ENCODE measurements at regions of chr5 and their contacts with region 1.

Region 1: GRCh38 chr5:144187699-144188294 is 17.1 kb downstream of the KCTD16 start:
- DNase-seq: no peak
- ATAC-seq: no peak
- H3K4me3 ChIP-seq: no peak overlapping the region
- H3K27ac ChIP-seq: no peak overlapping the region
- H3K4me1 ChIP-seq: no peaks in the 10 kb centered on the region
- H3K27me3 ChIP-seq: peaks cover 12% of the 10 kb centered on the region; the same call in 1 of the 2 replicates
- CTCF ChIP-seq: no peak
- POLR2A ChIP-seq: no peak
- RAD21 ChIP-seq: no peak

Region 2: DNA sequence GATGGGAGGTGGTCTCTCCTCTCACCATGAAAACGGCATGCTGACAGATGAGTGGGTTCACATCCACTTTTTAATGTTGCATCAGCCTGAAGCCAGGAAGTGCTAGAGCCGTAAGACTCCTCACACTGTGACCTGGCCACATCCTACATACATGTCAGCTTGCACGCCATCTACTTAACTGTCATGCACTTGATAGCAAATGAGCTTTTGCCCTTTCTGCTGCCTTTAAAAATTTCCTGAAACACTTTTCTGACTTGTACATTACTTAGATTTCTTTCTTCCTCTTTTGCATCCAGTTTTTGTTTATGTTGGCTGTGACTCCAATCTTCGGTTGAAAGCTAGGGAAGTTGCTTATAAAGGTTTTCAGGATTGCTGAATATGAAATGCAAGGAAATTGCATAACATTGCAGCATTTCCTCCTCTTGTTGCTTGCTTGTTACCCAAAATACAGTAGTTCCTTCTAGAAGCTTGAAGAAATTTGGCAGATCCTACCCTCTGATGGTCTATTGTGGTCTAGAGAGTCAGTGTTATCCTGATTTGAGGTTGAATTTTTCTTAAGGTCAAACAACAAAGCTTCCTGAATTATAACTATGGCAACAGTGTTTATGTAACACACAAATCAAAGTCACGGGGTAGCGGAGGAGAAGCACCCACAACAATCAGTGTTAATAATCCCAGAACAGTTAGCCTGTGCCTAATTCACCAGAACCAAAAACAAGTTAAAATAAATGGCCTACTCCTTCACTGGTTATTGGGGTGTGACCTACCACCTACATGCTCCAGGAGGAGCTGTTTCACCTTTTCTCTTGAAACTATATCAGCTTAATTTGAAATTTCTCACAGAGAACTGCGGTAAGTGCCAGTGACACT is 1185.1 kb before region 1 on chr5:
- CTCF ChIA-PET with region 1: no interaction called
- POLR2A ChIA-PET with region 1: no interaction called
- RAD21 ChIA-PET with region 1: no interaction called
- intact Hi-C with region 1: loop called (anchors 10 kb)
- DNase-seq: no peak
- ATAC-seq: peak; percentile 76
- H3K4me3 ChIP-seq: no peak overlapping the region
- H3K27ac ChIP-seq: no peak overlapping the region
- H3K4me1 ChIP-seq: peaks cover 4 to 6% of the 10 kb centered on the region in 2 experiments; a peak in 2 of 4 replicates
- H3K27me3 ChIP-seq: no peaks in the 10 kb centered on the region
- CTCF ChIP-seq: peak; percentile 40 to 63 (median 43); a peak in 4 of 6 replicates
- POLR2A ChIP-seq: no peak
- RAD21 ChIP-seq: peak; percentile 72

Region 3: GRCh38 chr5:143685246-143685802 is 502.5 kb before region 1 on chr5:
- CTCF ChIA-PET with region 1: no interaction called
- POLR2A ChIA-PET with region 1: no interaction called
- RAD21 ChIA-PET with region 1: no interaction called
- intact Hi-C with region 1: no loop called
- DNase-seq: no peak
- ATAC-seq: no peak
- H3K4me3 ChIP-seq: no peak overlapping the region
- H3K27ac ChIP-seq: no peak overlapping the region
- H3K4me1 ChIP-seq: no peaks in the 10 kb centered on the region
- H3K27me3 ChIP-seq: no peaks in the 10 kb centered on the region
- CTCF ChIP-seq: peak; percentile 20 to 40 (median 32); a peak in 4 of 6 replicates
- POLR2A ChIP-seq: no peak
- RAD21 ChIP-seq: peak; percentile 74

Region 4: GRCh38 chr5:144121577-144121976 is 66.2 kb before region 1 on chr5:
- CTCF ChIA-PET with region 1: no interaction called
- POLR2A ChIA-PET with region 1: no interaction called
- RAD21 ChIA-PET with region 1: no interaction called
- intact Hi-C with region 1: no loop called
- DNase-seq: no peak
- ATAC-seq: no peak
- H3K4me3 ChIP-seq: no peak overlapping the region
- H3K27ac ChIP-seq: no peak overlapping the region
- H3K4me1 ChIP-seq: no peaks in the 10 kb centered on the region
- H3K27me3 ChIP-seq: no peaks in the 10 kb centered on the region
- CTCF ChIP-seq: no peak
- POLR2A ChIP-seq: no peak
- RAD21 ChIP-seq: no peak

Measured in HCT116 (cell line).